Naive thymus-derived CD4-positive, alpha-beta T cell (primary cell): ENCODE measurements at regions of chr20 and their contacts with region 1.

Region 1: GRCh38 chr20:53402233-53403005 is 191.2 kb downstream of the ZNF217 start:
- DNase-seq: peak in 7 of 9 donors; percentile 9 to 60 (median 18)
- ATAC-seq: peak; percentile 91
- H3K4me3 ChIP-seq: no peak overlapping the region
- H3K4me3 Mint-ChIP-seq: peak overlapping the region in 9 of 10 donors; percentile 36 to 72 (median 55)
- H3K27ac ChIP-seq: peak overlapping the region; percentile 26
- H3K27ac Mint-ChIP-seq: peak overlapping the region in 8 of 9 donors; percentile 23 to 90 (median 73)
- H3K4me1 ChIP-seq: peaks cover 0 to 11% of the 10 kb centered on the region in 2 donors
- H3K4me1 Mint-ChIP-seq: peaks cover 9 to 75% (median 58%) of the 10 kb centered on the region in 7 donors
- H3K27me3 ChIP-seq: no peaks in the 10 kb centered on the region
- H3K27me3 Mint-ChIP-seq: no peaks in the 10 kb centered on the region

Region 2: GRCh38 chr20:53387983-53388675 is 14.3 kb before region 1 on chr20:
- CTCF ChIA-PET with region 1: no interaction called
- POLR2A ChIA-PET with region 1: no interaction called
- intact Hi-C with region 1: loop called in 1 of 2 experiments (anchors 1 kb)
- DNase-seq: peak in 7 of 9 donors; percentile 54 to 87 (median 77)
- ATAC-seq: peak; percentile 97
- H3K4me3 ChIP-seq: no peak overlapping the region
- H3K4me3 Mint-ChIP-seq: peak overlapping the region in 9 of 10 donors; percentile 9 to 73 (median 34)
- H3K27ac ChIP-seq: peak overlapping the region; percentile 32
- H3K27ac Mint-ChIP-seq: peak overlapping the region; percentile 9 to 92 (median 81)
- H3K4me1 ChIP-seq: peaks cover 0 to 21% of the 10 kb centered on the region in 2 donors
- H3K4me1 Mint-ChIP-seq: peaks cover 16 to 54% (median 42%) of the 10 kb centered on the region in 7 donors
- H3K27me3 ChIP-seq: no peaks in the 10 kb centered on the region
- H3K27me3 Mint-ChIP-seq: peaks cover 0 to 5% (median 0%) of the 10 kb centered on the region in 5 donors

Region 3: GRCh38 chr20:53611449-53611894 is 209.1 kb after region 1 on chr20:
- CTCF ChIA-PET with region 1: no interaction called
- POLR2A ChIA-PET with region 1: no interaction called
- intact Hi-C with region 1: no loop called
- DNase-seq: peak in 1 of 9 donors; percentile 15
- ATAC-seq: no peak
- H3K4me3 ChIP-seq: no peak overlapping the region
- H3K4me3 Mint-ChIP-seq: no peak overlapping the region
- H3K27ac ChIP-seq: peak overlapping the region; percentile 35
- H3K27ac Mint-ChIP-seq: peak overlapping the region in 8 of 9 donors; percentile 48 to 81 (median 76)
- H3K4me1 ChIP-seq: peaks cover 12 to 22% of the 10 kb centered on the region in 2 donors
- H3K4me1 Mint-ChIP-seq: peaks cover 10 to 46% (median 37%) of the 10 kb centered on the region in 7 donors
- H3K27me3 ChIP-seq: no peaks in the 10 kb centered on the region
- H3K27me3 Mint-ChIP-seq: no peaks in the 10 kb centered on the region